PC-9 (cell line): ENCODE measurements at regions of chr22 and their contacts with region 1.

Region 1: DNA sequence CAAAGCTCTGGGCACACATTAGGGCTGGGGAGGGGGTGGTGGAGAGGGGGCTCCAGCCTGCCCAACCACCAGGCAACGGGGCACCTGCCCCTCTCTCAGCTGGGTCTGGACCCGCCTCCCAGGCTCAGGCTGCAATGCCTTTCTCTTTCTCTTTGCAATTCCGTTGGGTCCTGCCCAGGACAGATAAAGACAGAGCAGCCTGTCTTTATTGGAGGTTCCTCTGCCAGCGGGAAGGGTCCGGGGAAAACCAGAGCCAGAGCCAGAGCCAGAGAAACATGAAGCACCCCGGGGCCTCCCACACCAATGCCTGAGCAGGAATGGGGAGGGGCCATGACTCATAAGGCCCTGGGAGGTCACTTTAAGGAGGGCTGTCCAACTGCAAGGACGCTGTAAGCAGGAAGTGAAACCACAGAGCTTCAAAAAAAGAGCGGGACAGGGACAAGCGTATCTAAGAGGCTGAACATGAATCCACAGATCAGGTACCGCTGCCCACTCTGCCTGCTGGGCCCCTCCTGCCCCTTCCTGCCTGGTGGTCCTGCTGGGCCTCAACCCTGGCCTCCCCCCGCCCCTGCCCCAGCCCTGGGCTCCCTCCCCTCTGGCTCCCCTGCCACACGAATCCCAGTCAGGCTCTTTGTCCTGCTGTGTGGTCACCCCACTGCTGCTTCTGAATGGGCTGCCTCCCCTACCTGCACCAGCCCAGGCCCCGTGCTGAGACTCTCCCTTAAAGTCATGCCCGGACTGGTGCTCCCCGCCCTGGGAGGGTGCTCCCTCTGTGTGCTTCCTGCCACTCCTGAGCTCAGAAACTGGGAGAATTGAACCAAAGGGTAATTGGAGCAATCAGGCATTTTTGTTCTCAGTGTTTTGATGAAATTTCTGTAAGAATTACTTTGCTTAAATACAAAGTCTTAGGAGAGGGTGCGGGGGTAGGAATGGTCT is at the start of gene APOBEC3B:
- DNase-seq: peak; percentile 94 to 99
- H3K4me3 ChIP-seq: peak within 1 kb of the TSS; percentile 58
- H3K27ac ChIP-seq: peak within 1 kb of the TSS; percentile 94
- H3K4me1 ChIP-seq: peaks cover 47% of the 10 kb centered on the region
- H3K27me3 ChIP-seq: no peaks in the 10 kb centered on the region
- CTCF ChIP-seq: no peak
- total RNA-seq, gene APOBEC3B: 66.5 and 83.6 TPM in 2 replicates

Region 2: DNA sequence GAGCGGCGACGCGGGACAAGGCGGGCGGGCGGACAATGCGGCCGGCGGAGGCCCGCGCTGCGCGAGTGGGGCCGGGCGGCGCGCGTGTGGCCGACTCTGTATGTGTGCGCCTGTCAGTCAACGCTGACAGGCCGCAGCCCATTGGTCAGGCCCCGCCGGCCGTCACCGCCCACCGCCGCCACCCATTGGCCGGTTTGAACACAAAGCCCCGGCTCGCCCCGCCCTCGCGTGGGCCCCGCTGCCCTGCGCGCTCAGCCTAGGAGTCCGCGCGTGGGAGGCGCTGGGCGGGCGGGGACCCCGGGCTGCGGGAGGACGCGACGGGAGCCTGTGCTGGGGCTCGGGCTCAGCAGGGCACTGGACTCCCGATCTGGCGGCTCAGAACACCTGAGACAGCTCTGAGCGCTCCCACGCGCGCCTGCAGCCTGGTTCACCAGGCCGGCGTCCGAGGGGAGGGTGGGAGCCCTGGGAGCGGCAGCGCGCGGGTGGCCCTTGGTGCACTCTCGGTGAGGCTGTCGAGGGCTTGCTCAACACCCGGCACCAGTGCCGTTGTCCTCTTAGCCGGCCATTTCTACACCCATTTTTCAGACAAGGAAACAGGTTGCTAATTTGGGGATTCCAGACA is 226.2 kb before region 1 on chr22 and contains the start of gene SUN2:
- CTCF ChIA-PET with region 1: no interaction called
- POLR2A ChIA-PET with region 1: interaction called, 6 read pairs
- intact Hi-C with region 1: loop called (anchors 10 kb)
- DNase-seq: peak; percentile 71 to 90
- H3K4me3 ChIP-seq: peak within 1 kb of the TSS; percentile 89
- H3K27ac ChIP-seq: peak within 1 kb of the TSS; percentile 87
- H3K4me1 ChIP-seq: peaks cover 55% of the 10 kb centered on the region
- H3K27me3 ChIP-seq: no peaks in the 10 kb centered on the region
- CTCF ChIP-seq: no peak
- total RNA-seq, gene SUN2: 169 and 220 TPM in 2 replicates

Region 3: GRCh38 chr22:38921119-38921518 is 61.1 kb before region 1 on chr22:
- CTCF ChIA-PET with region 1: interaction called, 10 read pairs
- POLR2A ChIA-PET with region 1: interaction called, 46 read pairs
- intact Hi-C with region 1: loop called (anchors 1 kb)
- DNase-seq: peak; percentile 93 to 94
- H3K4me3 ChIP-seq: no peak overlapping the region
- H3K27ac ChIP-seq: peak overlapping the region; percentile 38
- H3K4me1 ChIP-seq: peaks cover 57% of the 10 kb centered on the region
- H3K27me3 ChIP-seq: peaks cover 13% of the 10 kb centered on the region; the same call in 1 of the 2 replicates
- CTCF ChIP-seq: no peak

Region 4: GRCh38 chr22:38927033-38927781 is 55.1 kb before region 1 on chr22:
- CTCF ChIA-PET with region 1: interaction called, 10 read pairs
- POLR2A ChIA-PET with region 1: no interaction called
- intact Hi-C with region 1: loop called (anchors 1 kb)
- DNase-seq: peak in 1 of 2 experiments; percentile 89
- H3K4me3 ChIP-seq: no peak overlapping the region
- H3K27ac ChIP-seq: no peak overlapping the region
- H3K4me1 ChIP-seq: peaks cover 39% of the 10 kb centered on the region
- H3K27me3 ChIP-seq: no peaks in the 10 kb centered on the region
- CTCF ChIP-seq: peak; percentile 50

Region 5: GRCh38 chr22:38935023-38935422 is 47.2 kb before region 1 on chr22:
- CTCF ChIA-PET with region 1: no interaction called
- POLR2A ChIA-PET with region 1: no interaction called
- intact Hi-C with region 1: loop called (anchors 5 kb)
- DNase-seq: peak; percentile 89 to 95
- H3K4me3 ChIP-seq: no peak overlapping the region
- H3K27ac ChIP-seq: no peak overlapping the region
- H3K4me1 ChIP-seq: peaks cover 34% of the 10 kb centered on the region
- H3K27me3 ChIP-seq: no peaks in the 10 kb centered on the region
- CTCF ChIP-seq: no peak

Region 6: DNA sequence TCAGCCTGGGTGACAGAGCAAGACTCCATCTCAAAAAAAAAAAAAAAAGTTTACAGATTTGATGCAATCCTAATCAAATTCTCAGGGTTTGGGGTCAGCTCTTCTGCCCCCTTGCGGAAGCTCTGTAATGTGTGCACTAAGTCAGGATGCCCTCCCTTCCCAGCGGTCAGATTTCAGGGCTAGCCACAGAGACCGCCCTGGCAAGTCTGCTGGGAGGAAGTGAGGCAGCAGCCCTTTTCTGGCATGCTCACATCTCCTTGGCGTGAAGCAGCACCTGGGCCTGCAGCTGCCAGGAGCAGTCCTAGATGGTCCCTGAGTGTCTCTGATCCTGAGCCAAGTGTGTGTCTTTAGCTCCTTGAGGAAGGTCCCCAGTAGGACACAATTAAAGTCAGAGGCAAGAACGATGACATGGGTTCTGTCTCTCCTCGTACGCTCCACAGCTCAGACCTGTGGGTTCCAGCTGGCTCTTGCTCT is 20.9 kb after region 1 on chr22:
- CTCF ChIA-PET with region 1: interaction called, 15 read pairs
- POLR2A ChIA-PET with region 1: interaction called, 3 read pairs
- intact Hi-C with region 1: loop called (anchors 2 kb)
- DNase-seq: peak; percentile 89 to 94
- H3K4me3 ChIP-seq: no peak overlapping the region
- H3K27ac ChIP-seq: peak overlapping the region; percentile 20; the same call in 1 of the 2 replicates
- H3K4me1 ChIP-seq: peaks cover 11% of the 10 kb centered on the region
- H3K27me3 ChIP-seq: no peaks in the 10 kb centered on the region
- CTCF ChIP-seq: peak; percentile 95

Region 7: GRCh38 chr22:39068033-39068791 is 86.0 kb after region 1 on chr22:
- CTCF ChIA-PET with region 1: no interaction called
- POLR2A ChIA-PET with region 1: interaction called, 40 read pairs
- intact Hi-C with region 1: no loop called
- DNase-seq: peak; percentile 55 to 97
- H3K4me3 ChIP-seq: peak overlapping the region; percentile 29; the same call in 1 of the 2 replicates
- H3K27ac ChIP-seq: peak overlapping the region; percentile 99
- H3K4me1 ChIP-seq: peaks cover 84% of the 10 kb centered on the region
- H3K27me3 ChIP-seq: no peaks in the 10 kb centered on the region
- CTCF ChIP-seq: peak; percentile 65